ENCODE measurements at regions of chr5 and their contacts with region 1.

Region 1: GRCh38 chr5:138178516-138179276 is at the starts of genes BRD8 and KIF20A:
- DNase-seq: peak; percentile 98
- H3K4me3 Mint-ChIP-seq: no peak within 1 kb of the TSS
- H3K27ac Mint-ChIP-seq: peak within 1 kb of the TSS; percentile 63
- H3K4me1 Mint-ChIP-seq: peaks cover 12% of the 10 kb centered on the region
- H3K27me3 Mint-ChIP-seq: no peaks in the 10 kb centered on the region
- total RNA-seq, gene BRD8: 94.8 to 95.6 TPM
- total RNA-seq, gene KIF20A: 78.9 to 81.9 TPM

Region 2: DNA sequence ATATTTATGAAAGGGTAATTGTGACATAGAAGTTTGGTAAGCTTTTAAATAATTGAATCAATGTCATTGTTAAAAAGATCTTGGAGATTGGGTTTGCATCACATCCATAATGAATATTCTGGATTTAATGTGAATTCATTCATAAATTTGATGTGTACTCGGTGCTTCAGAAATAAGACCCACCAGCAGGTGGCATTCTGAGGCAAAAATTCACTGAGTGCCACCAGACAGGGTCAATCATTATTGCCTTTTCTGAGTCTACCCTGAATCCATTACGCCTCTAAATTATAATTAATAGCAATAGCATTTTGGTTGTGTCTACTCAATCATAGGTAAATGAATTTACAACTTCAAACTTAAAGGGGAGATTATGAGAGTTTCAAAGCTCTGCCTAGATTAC is 1814.4 kb before region 1 on chr5:
- CTCF ChIA-PET with region 1: no interaction called
- intact Hi-C with region 1: no loop called
- DNase-seq: no peak
- H3K4me3 Mint-ChIP-seq: no peak overlapping the region
- H3K27ac Mint-ChIP-seq: no peak overlapping the region
- H3K4me1 Mint-ChIP-seq: no peaks in the 10 kb centered on the region
- H3K27me3 Mint-ChIP-seq: peaks cover 8% of the 10 kb centered on the region

Region 3: DNA sequence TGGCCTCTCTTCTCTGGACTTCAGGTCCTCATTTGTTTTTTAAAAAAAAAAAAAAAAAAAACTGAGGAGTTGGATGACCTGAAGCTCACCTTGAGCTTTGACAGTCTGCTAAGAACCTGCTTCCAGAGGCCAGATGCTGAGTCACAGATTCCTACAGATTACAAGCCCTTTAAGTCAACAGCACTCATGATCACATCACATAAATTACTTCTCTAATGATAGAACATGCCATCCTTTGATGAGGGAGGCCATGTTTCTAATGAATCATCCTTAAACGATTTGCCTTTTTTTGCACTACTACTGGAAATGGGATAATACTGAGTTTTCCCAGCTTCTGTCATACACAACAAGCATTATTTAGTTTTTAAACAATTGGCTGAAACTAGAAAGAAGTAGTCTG is 345.2 kb before region 1 on chr5:
- CTCF ChIA-PET with region 1: no interaction called
- intact Hi-C with region 1: no loop called
- DNase-seq: no peak
- H3K4me3 Mint-ChIP-seq: no peak overlapping the region
- H3K27ac Mint-ChIP-seq: no peak overlapping the region
- H3K4me1 Mint-ChIP-seq: no peaks in the 10 kb centered on the region
- H3K27me3 Mint-ChIP-seq: no peaks in the 10 kb centered on the region

Region 4: GRCh38 chr5:138077065-138077696 is 101.5 kb before region 1 on chr5:
- CTCF ChIA-PET with region 1: no interaction called
- intact Hi-C with region 1: loop called (anchors 1 kb)
- DNase-seq: peak; percentile 77
- H3K4me3 Mint-ChIP-seq: no peak overlapping the region
- H3K27ac Mint-ChIP-seq: no peak overlapping the region
- H3K4me1 Mint-ChIP-seq: peaks cover 14% of the 10 kb centered on the region
- H3K27me3 Mint-ChIP-seq: no peaks in the 10 kb centered on the region

Region 5: DNA sequence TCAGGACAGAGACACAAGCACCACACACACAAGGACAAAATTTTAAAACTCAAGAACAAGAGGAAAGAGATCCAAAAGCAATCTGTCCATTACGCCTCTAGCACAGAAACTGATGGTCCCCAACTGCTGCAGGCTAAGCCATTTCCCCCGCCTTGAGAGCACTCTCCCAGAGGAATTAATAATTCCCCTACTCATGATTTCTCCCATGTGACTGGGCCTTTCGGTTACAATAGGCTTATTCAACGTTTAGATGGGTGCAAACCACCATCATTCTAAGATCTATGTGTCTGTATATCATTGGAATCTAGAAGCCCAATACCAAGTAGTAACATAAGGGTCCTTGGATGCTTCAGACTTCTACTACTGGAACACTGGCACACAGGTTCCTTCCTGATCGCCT is 19.0 kb before region 1 on chr5:
- CTCF ChIA-PET with region 1: no interaction called
- intact Hi-C with region 1: no loop called
- DNase-seq: no peak
- H3K4me3 Mint-ChIP-seq: no peak overlapping the region
- H3K27ac Mint-ChIP-seq: no peak overlapping the region
- H3K4me1 Mint-ChIP-seq: no peaks in the 10 kb centered on the region
- H3K27me3 Mint-ChIP-seq: no peaks in the 10 kb centered on the region

Region 6: DNA sequence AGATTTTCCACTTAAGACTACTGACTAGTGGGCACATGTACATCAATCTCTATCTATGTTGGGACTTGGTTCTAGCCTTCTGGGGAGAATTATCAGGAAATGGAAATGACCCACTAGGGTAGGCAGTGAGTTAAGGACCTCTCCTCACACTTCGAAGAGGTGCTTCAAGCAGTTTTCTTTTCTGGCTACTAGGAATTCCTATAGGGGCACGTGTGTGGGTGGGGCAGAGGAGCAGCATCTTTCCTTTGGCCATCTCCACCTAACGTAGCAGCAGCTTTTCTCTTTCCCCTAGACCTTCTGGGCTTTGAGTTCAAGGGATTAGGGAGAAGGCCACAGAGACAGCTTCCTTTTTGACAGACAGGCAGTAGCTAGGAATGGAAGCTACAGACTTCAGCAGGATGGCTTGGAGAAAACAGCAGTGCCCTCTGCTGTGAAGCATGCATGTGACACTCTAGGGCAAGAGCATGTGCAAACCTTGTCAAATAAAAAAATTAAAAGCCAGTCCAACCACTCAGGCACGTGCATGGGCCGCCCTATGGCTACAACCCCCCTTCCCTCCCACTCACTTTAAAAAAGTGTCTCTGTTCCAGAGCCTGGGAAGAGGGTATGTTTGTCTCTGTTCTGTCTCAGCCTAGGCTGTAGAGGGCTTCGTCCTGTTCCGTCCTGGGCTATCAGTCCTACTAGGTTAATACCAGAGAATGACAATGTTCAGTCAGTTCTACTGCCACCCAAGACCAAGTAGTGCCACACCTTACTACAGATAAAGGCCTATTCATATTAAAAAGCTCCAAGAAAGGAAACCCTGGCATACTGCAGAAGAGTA is 104.4 kb after region 1 on chr5:
- CTCF ChIA-PET with region 1: interaction called, 9 read pairs
- intact Hi-C with region 1: loop called (anchors 1 kb)
- DNase-seq: peak; percentile 15
- H3K4me3 Mint-ChIP-seq: no peak overlapping the region
- H3K27ac Mint-ChIP-seq: no peak overlapping the region
- H3K4me1 Mint-ChIP-seq: no peaks in the 10 kb centered on the region
- H3K27me3 Mint-ChIP-seq: no peaks in the 10 kb centered on the region

Region 7: GRCh38 chr5:138352071-138352721 is 173.5 kb after region 1 on chr5 and contains the start of gene KDM3B:
- CTCF ChIA-PET with region 1: interaction called, 23 read pairs
- intact Hi-C with region 1: loop called (anchors 1 kb)
- DNase-seq: peak; percentile 91
- H3K4me3 Mint-ChIP-seq: peak within 1 kb of the TSS; percentile 96
- H3K27ac Mint-ChIP-seq: peak within 1 kb of the TSS; percentile 94
- H3K4me1 Mint-ChIP-seq: peaks cover 37% of the 10 kb centered on the region
- H3K27me3 Mint-ChIP-seq: no peaks in the 10 kb centered on the region
- total RNA-seq, gene KDM3B: 33.4 to 36.2 TPM

Region 8: DNA sequence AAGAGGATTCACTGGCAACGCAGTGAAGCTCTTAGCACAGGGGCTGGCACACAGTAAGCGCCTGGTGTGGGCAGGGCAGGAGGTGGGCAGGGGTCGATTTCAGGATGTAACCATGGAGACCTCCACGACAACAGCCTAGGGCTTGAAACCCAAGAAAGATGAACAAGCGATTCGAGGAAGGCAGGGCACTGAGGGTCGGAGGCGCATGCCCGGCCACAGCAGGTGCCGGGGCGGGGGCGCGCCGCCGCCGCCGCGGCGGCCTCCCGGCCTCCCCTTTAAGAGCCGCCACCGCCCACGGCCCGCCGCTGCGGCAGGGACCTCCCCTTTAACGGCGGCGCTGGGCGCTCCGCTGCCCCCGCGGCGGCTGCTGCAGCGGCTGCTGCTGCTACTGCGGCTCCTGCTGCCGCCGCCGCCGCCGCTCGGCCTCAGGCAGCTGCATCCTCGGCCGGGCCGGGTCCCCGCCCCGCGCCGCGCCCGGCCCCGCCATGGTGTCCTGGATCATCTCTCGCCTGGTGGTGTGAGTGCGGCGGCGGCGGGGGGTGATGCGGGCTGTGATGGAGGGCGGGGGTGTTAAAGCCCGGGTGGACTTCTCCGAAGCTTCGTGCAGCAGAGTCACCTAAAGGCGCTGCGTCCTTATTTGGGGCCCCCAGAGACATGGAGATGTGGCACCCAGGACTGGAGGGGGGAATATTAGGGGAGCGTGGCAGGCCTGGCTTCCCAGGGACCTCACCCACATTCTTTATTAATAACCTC is 260.2 kb after region 1 on chr5 and contains the start of gene REEP2:
- CTCF ChIA-PET with region 1: no interaction called
- intact Hi-C with region 1: loop called (anchors 10 kb)
- DNase-seq: peak; percentile 62
- H3K4me3 Mint-ChIP-seq: peak within 1 kb of the TSS; percentile 72
- H3K27ac Mint-ChIP-seq: no peak within 1 kb of the TSS
- H3K4me1 Mint-ChIP-seq: peaks cover 5% of the 10 kb centered on the region
- H3K27me3 Mint-ChIP-seq: peaks cover 3% of the 10 kb centered on the region
- total RNA-seq, gene REEP2: 1.8 to 2.2 TPM

Region 9: DNA sequence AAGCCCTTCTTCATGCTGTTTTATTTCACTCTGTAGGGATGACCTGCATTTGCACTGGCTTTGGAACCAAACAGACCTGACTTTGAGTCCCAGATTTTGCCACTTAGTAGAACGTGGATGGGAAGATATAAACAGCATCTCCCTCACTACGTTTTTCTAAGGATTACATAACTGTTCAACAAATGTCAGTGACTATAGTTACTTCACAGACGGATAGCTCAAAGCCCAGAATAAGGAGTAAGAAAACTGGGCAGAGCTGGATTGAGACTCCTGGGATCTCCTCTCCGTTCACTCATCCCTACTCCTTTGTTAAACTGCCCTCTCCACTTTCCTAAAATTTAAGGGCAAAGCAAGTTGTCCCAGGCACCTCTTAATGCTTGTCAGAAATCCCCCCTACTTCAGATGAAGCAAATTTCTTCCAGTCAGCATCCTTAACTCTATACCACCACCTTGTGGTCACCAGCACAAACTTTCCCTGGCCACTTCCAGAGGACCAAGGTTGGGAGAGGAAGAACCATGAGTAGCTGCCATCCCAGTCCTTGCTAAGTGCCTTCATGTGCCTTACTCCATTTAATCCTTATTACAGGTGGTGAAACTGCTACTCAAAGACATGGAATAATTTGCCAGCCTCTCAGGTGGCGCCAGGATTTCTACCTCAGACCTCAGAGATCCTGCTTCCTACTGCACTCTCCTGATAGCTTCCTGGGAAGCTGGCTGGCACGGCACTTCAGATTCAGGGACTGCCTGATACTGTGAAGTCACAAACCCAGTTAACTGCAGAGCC is 325.0 kb after region 1 on chr5:
- CTCF ChIA-PET with region 1: interaction called, 6 read pairs
- intact Hi-C with region 1: loop called (anchors 1 kb)
- DNase-seq: peak; percentile 53
- H3K4me3 Mint-ChIP-seq: no peak overlapping the region
- H3K27ac Mint-ChIP-seq: no peak overlapping the region
- H3K4me1 Mint-ChIP-seq: no peaks in the 10 kb centered on the region
- H3K27me3 Mint-ChIP-seq: no peaks in the 10 kb centered on the region